Activated naive CD4-positive, alpha-beta T cell treated with anti-CD3 and anti-CD28 coated beads for 36 hours (primary cell): ENCODE measurements at regions of chrX and their contacts with region 1.

Region 1: DNA sequence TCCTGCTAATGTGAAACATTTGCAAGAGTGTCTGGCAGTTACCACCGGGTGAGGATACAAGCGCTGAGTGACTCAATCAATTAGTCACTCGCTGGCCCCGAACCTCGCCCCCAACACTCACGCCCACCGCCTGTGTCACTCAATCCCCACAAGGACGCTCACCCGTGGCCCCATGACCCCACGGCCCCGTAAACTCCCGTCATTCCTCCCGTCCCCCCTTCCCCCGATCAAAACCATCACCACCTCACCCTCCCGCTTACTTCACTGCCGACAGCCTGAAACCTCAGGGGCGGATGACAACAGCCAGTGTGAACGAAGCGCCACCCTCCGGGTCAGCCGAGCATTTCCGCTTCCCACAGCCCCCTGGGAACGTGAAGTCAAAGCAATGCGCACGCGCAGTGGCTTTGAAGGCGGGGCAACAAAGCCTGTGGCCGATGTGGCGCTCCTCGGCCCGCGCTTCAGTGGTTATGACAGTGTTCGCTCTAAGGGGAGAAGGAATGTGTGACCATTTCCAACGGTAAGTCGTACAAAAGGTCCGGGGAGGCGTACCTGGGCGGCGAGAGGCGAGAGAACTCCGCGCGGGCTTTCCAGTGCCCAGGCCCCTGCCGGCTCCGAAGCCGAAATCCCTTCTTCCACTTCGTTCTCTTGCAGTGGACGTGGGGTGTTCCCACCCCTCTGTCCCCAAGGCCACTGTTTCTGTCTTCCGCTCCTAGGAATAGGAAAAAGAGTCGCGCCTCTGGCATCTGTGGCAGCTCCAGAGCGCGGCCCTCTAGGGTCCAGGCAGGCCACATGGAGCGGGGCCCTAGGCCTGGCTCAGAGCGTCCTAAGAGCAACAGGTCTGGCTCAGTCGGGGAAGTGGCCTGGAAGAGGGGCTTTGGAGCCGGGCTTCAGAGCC is at the start of gene ZNF674:
- DNase-seq: peak; percentile 94
- H3K4me3 Mint-ChIP-seq: peak within 1 kb of the TSS; percentile 95
- H3K27ac Mint-ChIP-seq: peak within 1 kb of the TSS; percentile 98
- H3K4me1 Mint-ChIP-seq: peaks cover 30% of the 10 kb centered on the region
- H3K27me3 Mint-ChIP-seq: no peaks in the 10 kb centered on the region
- total RNA-seq, gene ZNF674: 0.94 to 1.9 TPM

Region 2: GRCh38 chrX:46446727-46447378 is 98.5 kb before region 1 on chrX:
- CTCF ChIA-PET with region 1: no interaction called
- intact Hi-C with region 1: loop called (anchors 1 kb)
- DNase-seq: peak; percentile 89
- H3K4me3 Mint-ChIP-seq: peak overlapping the region; percentile 79
- H3K27ac Mint-ChIP-seq: peak overlapping the region; percentile 83
- H3K4me1 Mint-ChIP-seq: peaks cover 12% of the 10 kb centered on the region
- H3K27me3 Mint-ChIP-seq: no peaks in the 10 kb centered on the region